CD4-positive, alpha-beta memory T cell (primary cell): ENCODE measurements at regions of chr15 and their contacts with region 1.

Region 1: DNA sequence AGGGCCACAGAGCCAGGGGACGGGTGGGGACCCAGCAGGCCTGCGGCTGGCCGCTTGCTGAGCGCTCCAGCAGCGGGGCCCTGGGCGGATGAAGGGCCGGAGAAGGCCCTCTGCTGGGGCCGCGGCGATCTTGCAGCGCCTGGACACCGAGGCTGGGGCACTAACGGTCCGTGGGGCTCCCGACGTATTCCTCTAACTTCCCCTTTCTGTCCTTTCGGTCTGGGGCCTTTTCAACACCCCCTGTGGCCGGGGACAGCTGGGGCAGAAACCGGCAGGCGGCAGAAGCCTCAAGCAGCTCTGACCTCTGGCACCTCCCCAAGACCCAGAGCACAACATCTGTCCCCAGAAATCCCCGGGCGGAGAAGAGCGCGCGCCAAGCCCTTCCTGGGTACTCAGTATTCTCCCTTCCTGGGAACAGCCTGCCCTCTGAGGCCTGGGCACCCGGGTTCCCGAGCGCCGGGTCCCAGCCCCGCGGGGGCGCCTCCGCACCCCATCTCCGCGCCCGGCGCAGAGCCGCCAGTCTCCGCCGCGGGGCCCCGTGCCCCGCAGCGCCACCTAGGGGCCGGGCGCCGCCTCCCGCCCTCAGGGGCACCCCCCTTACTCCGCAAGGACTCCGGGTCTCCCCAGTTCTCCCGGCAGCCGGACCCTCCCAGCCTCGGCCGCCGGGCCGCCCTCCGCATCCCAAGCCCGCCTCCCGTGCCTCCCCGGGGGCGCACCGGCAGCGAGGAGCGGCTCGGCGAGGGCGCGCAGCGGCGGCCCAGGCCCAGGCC is 582 bp upstream of the SLCO3A1 start:
- DNase-seq: peak; percentile 70 to 89 (median 81)
- H3K4me3 ChIP-seq: peak overlapping the region in 1 of 2 donors; percentile 48
- H3K4me3 Mint-ChIP-seq: peak overlapping the region; percentile 83 to 93 (median 87)
- H3K27ac ChIP-seq: peak overlapping the region; percentile 87
- H3K27ac Mint-ChIP-seq: peak overlapping the region; percentile 86 to 95 (median 94)
- H3K4me1 ChIP-seq: peaks cover 69% of the 10 kb centered on the region
- H3K4me1 Mint-ChIP-seq: peaks cover 50 to 79% (median 60%) of the 10 kb centered on the region in 4 donors
- H3K27me3 ChIP-seq: no peaks in the 10 kb centered on the region
- H3K27me3 Mint-ChIP-seq: no peaks in the 10 kb centered on the region

Region 2: DNA sequence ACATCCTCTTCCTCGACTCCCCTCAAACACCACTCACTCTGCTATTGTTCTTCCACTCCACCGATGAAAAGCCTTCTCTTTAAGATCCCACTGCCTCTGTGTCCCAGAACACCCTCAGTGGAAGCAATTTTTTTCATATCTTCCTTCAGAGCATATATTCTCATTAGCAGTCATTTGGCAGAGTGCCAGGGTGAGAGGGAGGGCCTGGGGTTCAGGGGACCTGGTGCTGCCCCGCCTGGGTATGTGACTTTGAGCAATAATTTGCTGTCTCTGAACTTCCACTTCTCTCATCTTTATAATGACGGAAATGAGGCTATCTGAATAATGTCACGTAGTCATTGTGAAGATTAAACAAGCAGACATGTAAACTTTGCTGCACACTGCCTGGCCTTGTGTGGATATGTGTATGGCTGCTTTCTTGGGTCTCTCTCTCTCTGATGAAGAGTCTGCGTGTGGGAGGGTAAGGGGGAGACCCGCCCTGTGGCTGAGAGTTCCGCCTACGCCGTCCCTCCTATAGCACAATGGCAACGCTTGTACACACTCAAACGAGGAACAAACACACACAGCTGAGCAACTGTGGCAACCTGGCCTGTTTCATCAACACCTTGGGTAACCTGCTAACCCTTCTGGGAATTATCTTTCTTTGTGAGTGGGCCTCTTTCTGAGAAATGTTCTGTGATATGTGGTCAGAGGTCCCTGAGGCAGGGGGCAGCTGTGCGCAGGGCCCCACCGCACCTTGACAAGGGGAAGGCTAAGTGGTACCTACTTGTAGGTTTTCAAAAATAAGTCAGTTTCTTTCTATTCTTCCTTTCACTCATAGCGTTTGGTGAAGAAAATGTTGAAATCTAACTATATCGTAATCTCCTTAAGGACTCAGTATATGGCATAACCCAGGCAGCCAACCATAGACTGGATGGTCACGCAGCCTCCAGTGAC is 383.0 kb before region 1 on chr15:
- CTCF ChIA-PET with region 1: no interaction called
- POLR2A ChIA-PET with region 1: no interaction called
- intact Hi-C with region 1: loop called (anchors 5 kb)
- DNase-seq: peak; percentile 55 to 90 (median 87)
- H3K4me3 ChIP-seq: no peak overlapping the region
- H3K4me3 Mint-ChIP-seq: peak overlapping the region; percentile 10 to 76 (median 64)
- H3K27ac ChIP-seq: peak overlapping the region; percentile 57
- H3K27ac Mint-ChIP-seq: peak overlapping the region; percentile 87 to 99 (median 95)
- H3K4me1 ChIP-seq: peaks cover 82% of the 10 kb centered on the region
- H3K4me1 Mint-ChIP-seq: peaks cover 39 to 73% (median 53%) of the 10 kb centered on the region in 4 donors
- H3K27me3 ChIP-seq: no peaks in the 10 kb centered on the region
- H3K27me3 Mint-ChIP-seq: no peaks in the 10 kb centered on the region

Region 3: DNA sequence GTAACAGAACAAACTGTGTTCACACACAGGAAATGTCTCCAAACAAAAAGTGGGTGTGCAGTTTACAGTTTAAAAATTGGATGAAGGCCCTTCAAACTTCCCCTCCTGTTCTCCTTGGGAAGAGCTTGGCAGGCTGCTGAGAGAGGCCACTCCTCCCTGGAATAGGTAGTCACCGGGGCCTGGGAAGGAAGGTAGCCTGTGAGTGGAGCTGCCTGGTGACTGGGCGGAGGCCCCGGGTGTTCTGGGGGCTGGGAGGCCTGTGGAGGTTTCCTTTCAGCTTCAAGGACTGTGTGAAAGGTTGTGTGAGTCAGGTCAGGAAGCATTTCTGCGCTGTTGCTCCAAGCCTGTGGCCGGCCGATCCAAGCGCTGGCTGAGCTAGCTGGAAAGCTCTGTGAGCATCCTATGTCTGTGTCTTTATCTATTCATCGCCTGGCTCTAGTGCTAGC is 14.7 kb after region 1 on chr15:
- CTCF ChIA-PET with region 1: interaction called, 112 read pairs
- POLR2A ChIA-PET with region 1: interaction called, 26 read pairs
- intact Hi-C with region 1: loop called (anchors 1 kb)
- DNase-seq: no peak
- H3K4me3 ChIP-seq: no peak overlapping the region
- H3K4me3 Mint-ChIP-seq: peak overlapping the region; percentile 18 to 59 (median 52)
- H3K27ac ChIP-seq: no peak overlapping the region
- H3K27ac Mint-ChIP-seq: peak overlapping the region in 6 of 7 donors; percentile 17 to 72 (median 44)
- H3K4me1 ChIP-seq: peaks cover 91% of the 10 kb centered on the region
- H3K4me1 Mint-ChIP-seq: peaks cover 63 to 92% (median 76%) of the 10 kb centered on the region in 4 donors
- H3K27me3 ChIP-seq: no peaks in the 10 kb centered on the region
- H3K27me3 Mint-ChIP-seq: no peaks in the 10 kb centered on the region

Region 4: GRCh38 chr15:91942676-91943576 is 90.0 kb after region 1 on chr15:
- CTCF ChIA-PET with region 1: interaction called, 117 read pairs
- POLR2A ChIA-PET with region 1: interaction called, 6 read pairs
- intact Hi-C with region 1: loop called (anchors 1 kb)
- DNase-seq: peak; percentile 45 to 78 (median 60)
- H3K4me3 ChIP-seq: no peak overlapping the region
- H3K4me3 Mint-ChIP-seq: peak overlapping the region; percentile 42 to 89 (median 76)
- H3K27ac ChIP-seq: peak overlapping the region; percentile 37
- H3K27ac Mint-ChIP-seq: peak overlapping the region; percentile 41 to 89 (median 86)
- H3K4me1 ChIP-seq: peaks cover 48% of the 10 kb centered on the region
- H3K4me1 Mint-ChIP-seq: peaks cover 56 to 93% (median 72%) of the 10 kb centered on the region in 4 donors
- H3K27me3 ChIP-seq: no peaks in the 10 kb centered on the region
- H3K27me3 Mint-ChIP-seq: no peaks in the 10 kb centered on the region

Region 5: DNA sequence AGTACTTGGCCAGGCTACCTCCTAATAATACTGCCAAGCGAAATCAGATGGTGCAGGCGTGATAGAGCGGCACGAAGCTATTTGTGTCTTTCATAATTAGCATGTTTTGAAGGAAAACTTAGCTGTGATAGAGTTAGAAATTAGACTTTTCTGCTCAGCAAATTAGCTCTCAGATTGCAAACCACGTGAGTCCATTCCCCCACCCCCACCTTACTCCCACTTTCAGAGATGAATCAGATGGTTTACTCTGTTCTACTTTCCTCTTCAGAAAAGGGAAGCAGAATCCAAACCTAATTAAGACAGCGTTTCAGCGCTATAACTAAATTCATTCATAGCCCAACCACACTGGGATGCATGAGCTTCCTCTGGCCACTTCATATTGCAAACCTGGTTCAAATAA is 215.2 kb after region 1 on chr15:
- CTCF ChIA-PET with region 1: interaction called, 10 read pairs
- POLR2A ChIA-PET with region 1: no interaction called
- intact Hi-C with region 1: no loop called
- DNase-seq: no peak
- H3K4me3 ChIP-seq: no peak overlapping the region
- H3K4me3 Mint-ChIP-seq: peak overlapping the region in 3 of 8 donors; percentile 16 to 47 (median 30)
- H3K27ac ChIP-seq: no peak overlapping the region
- H3K27ac Mint-ChIP-seq: peak overlapping the region in 3 of 7 donors; percentile 22 to 80 (median 78)
- H3K4me1 ChIP-seq: peaks cover 30% of the 10 kb centered on the region
- H3K4me1 Mint-ChIP-seq: peaks cover 42 to 73% (median 59%) of the 10 kb centered on the region in 4 donors
- H3K27me3 ChIP-seq: no peaks in the 10 kb centered on the region
- H3K27me3 Mint-ChIP-seq: no peaks in the 10 kb centered on the region